HEK293 (cell line): ENCODE measurements at regions of chr17 and their contacts with region 1.

Region 1: DNA sequence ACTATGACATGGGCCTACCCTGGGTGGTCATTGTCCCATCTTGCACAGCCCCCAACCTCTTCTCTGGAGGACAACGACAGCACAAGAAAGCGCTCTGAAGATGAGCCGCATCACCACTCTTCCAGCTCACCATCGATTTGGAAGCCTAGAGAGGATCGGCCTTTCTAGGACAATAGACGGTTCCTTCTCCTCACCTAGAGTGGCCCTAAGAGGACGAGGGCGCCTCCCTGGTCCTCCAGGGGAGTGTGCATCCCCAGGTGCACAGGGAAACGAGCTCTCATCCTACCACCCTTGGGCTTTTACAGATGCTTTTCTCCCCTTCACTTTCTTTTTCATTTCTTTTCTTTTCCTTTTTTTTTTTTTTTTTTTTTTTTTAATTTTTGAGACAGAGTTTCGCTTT is 20.3 kb upstream of the SLC52A1 start:
- H3K4me3 ChIP-seq: no peak overlapping the region
- H3K27ac ChIP-seq: no peak overlapping the region
- H3K4me1 ChIP-seq: no peaks in the 10 kb centered on the region
- CTCF ChIP-seq: no peak

Region 2: DNA sequence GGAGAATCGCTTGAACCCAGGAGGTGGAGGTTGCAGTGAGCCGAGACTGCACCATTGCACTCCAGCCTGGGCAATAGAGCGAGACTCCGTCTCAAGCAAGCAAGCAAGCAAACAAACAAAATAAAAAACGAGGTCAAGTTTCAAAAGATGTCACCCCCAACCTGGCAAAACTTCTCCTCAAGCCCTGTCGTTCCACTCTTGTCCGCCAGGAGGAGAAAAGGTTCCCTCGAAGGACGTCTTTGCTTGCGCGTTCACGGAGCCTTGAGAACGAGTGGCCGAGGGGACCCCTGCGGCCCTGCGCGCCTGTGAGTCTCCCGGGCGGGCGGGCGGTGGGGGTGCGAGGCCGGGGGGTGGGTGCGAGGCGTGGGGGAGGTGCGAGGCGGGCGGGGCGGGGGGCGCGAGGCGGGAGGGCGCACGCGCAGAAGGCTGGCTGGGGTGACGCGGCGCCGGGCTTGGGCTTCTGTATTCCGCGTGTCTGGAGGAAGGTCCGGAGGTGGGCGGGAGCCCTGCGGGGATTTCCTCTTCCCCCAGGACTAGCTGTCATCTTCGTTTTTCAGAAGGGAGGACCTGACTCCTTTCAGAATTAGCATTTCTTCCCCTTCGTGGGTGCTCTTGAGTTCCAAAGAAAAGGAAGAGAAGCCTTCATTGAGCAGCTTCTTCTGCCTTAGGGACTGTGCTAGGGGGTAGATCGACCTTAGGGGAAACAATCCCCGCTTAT is 24.0 kb before region 1 on chr17:
- CTCF ChIA-PET with region 1: interaction called, 14 read pairs
- POLR2A ChIA-PET with region 1: no interaction called
- H3K4me3 ChIP-seq: peak overlapping the region; percentile 16
- H3K27ac ChIP-seq: no peak overlapping the region
- H3K4me1 ChIP-seq: 0 out of 2 replicates have a peak, but pooled peaks cover 2% of the 10 kb centered on the region
- CTCF ChIP-seq: peak; percentile 73